ENCODE measurements at regions of chr4 and their contacts with region 1.

Region 1: GRCh38 chr4:98527534-98528269 is 130.7 kb downstream of the TSPAN5 start:
- DNase-seq: no peak
- H3K4me3 Mint-ChIP-seq: no peak overlapping the region
- H3K27ac Mint-ChIP-seq: no peak overlapping the region
- H3K4me1 Mint-ChIP-seq: peaks cover 8% of the 10 kb centered on the region
- H3K27me3 Mint-ChIP-seq: no peaks in the 10 kb centered on the region
- CTCF ChIP-seq: no peak

Region 2: DNA sequence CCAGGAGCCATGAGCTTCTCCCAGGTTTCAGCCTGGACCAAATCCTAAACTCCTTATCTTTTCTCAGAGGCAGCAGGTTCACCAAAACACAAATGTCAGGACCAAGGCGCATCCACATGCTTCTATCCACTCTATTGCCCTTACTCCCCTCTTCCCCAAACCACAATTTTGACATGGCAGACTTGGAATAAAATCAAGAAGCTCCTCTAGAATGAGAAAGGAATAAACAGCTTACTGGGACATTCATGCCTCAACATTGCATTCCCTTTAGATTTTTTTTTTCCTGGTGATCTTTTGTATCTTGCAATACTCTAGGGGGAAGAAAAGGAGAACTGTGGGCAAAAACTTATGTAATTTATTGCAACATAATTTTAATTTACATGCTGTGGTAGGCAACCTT is 11.6 kb after region 1 on chr4:
- CTCF ChIA-PET with region 1: interaction called, 5 read pairs
- POLR2A ChIA-PET with region 1: interaction called, 10 read pairs
- intact Hi-C with region 1: no loop called
- DNase-seq: no peak
- H3K4me3 Mint-ChIP-seq: no peak overlapping the region
- H3K27ac Mint-ChIP-seq: no peak overlapping the region
- H3K4me1 Mint-ChIP-seq: peaks cover 6% of the 10 kb centered on the region
- H3K27me3 Mint-ChIP-seq: no peaks in the 10 kb centered on the region
- CTCF ChIP-seq: no peak

Region 3: DNA sequence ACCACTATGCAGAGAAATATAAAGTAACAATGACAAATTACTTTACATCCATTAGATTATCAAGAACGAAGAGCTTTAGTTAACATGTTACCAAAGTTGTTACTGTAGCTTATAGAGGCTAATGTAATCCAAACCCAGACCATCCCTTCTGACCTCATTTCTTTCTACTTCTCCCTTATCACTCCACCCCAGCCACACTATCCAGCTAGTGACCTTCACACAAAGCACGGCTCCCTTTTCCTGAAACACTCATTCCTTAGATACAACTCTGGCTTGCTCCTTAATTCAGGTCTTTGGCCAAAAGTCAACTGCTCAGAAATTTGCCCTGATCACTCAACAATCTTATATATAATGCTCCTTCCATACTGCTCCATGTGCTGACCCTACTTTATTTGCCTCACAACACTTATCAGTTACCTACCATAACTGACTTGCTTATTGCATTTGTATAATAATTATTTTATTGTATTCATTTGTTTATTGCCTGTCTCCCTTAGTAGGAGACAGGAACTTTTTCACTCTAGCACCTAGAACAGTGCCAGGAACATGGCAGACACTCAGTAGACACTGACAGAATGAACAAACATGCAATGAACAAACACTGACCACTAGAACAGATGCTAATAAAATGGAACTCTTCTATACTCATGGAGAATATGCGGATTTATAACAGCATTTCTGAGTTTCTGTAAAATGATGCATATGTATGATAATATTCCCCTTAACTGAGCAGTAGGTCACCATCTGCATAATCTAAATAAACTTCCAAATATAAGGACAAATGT is 333.6 kb after region 1 on chr4:
- CTCF ChIA-PET with region 1: no interaction called
- POLR2A ChIA-PET with region 1: no interaction called
- intact Hi-C with region 1: no loop called
- DNase-seq: no peak
- H3K4me3 Mint-ChIP-seq: no peak overlapping the region
- H3K27ac Mint-ChIP-seq: no peak overlapping the region
- H3K4me1 Mint-ChIP-seq: peaks cover 8% of the 10 kb centered on the region
- H3K27me3 Mint-ChIP-seq: no peaks in the 10 kb centered on the region
- CTCF ChIP-seq: no peak

Measured in MCF 10A (cell line).